ENCODE measurements at regions of chr17 and their contacts with region 1.

Region 1: DNA sequence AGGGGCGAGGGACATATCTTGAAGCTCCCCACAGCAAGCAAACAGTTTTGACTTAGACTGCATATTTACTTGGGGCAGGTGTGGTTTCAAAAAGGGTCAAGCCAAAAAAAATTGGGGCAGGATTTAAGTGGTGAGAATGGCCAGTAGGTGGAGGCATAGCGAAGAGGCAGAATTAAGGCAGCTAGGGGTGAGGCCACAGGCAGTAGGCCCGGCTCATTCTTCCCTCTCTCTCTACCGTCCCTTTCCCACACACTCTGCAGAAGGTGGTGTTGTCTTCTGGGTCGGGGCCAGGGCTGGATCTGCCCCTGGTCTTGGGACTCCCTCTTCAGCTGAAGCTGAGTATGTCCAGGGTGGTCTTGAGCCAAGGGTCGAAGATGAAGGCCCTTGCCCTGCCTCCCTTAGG is 2.6 kb downstream of the SHBG start:
- DNase-seq: no peak
- H3K4me3 ChIP-seq: no peak overlapping the region
- CTCF ChIP-seq: peak; percentile 58

Region 2: GRCh38 chr17:7620835-7621234 is 11.7 kb before region 1 on chr17:
- CTCF ChIA-PET with region 1: interaction called, 67 read pairs
- POLR2A ChIA-PET with region 1: no interaction called
- DNase-seq: no peak
- H3K4me3 ChIP-seq: no peak overlapping the region
- CTCF ChIP-seq: no peak

Region 3: GRCh38 chr17:7650509-7651096 is 18.1 kb after region 1 on chr17 and contains the start of gene ATP1B2:
- CTCF ChIA-PET with region 1: interaction called, 26 read pairs
- POLR2A ChIA-PET with region 1: no interaction called
- DNase-seq: no peak
- H3K4me3 ChIP-seq: peak within 1 kb of the TSS; percentile 32
- CTCF ChIP-seq: no peak

Region 4: DNA sequence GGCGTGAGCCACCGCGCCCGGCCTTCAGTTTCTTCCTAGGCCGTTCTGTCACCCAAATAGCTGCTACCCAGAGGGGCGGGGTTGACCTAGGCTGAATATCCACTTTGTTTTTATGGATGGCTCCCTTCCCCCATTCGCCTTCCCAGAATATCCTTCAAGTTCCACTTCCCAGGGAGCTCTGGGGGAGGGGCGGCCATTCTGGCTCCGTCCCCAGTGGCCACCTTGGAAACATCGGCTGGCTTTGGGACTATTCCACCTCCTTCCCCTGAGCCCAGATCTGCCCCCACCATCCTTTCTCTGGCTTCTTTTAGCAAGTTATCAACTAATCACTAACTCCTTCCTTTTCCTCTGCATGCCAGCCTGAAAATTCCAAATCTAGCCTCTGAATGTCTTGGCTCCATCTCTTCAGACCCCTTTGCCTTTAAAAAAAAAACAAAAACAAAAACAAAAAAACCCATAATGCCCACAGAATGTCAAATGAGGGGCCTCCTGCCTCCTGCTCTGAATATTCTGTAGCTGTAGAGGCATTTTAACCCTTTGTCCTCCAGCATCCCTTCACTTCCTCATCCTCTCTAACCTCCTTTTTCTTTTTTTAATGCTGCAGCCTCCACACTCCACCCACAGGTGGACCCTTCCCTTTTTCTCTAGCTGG is 24.6 kb after region 1 on chr17:
- CTCF ChIA-PET with region 1: interaction called, 17 read pairs
- POLR2A ChIA-PET with region 1: interaction called, 3 read pairs
- DNase-seq: no peak
- H3K4me3 ChIP-seq: no peak overlapping the region
- CTCF ChIP-seq: no peak

Region 5: GRCh38 chr17:7897773-7898172 is 265.3 kb after region 1 on chr17:
- CTCF ChIA-PET with region 1: no interaction called
- POLR2A ChIA-PET with region 1: no interaction called
- DNase-seq: no peak
- H3K4me3 ChIP-seq: no peak overlapping the region
- CTCF ChIP-seq: peak; percentile 44

Measured in AG04449 (cell line).